ENCODE measurements at regions of chr11 and their contacts with region 1.

Region 1: DNA sequence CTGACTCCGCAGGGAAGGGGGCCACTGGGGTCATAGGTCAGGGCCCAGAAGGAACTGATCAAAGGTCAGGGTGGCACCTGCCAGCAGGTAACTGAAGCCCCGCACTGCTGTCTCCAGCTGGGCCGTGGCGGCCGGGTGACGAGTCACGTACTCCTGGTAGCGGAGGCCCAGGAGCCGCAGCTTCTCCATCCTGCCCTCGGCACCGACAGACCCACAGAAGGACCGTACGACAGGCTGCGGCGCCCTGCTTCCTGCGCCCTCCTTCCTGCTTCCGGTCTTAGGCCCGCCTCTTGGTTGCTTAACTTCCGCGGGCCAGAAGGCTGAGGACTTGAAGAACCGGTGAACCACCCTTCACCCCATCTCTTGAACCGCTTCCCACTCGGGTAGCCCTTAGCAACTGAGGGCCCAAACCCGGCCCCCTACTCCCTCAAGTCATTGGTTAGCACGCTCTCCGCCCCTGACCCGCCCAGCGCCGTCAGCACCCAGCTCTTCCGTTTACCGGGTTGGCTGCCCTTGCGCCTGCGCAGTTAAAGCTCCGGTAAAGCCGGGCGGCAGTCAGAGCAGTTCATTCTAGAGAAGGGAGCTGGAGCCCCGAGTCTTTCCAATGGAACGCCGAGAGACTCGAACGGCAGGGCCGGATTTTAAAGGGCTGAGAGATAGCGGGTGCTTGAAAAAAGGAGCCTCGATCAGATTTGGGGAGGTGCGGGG is at the start of gene PEX16:
- DNase-seq: peak; percentile 87
- ATAC-seq: peak; percentile 85
- H3K4me3 Mint-ChIP-seq: peak within 1 kb of the TSS; percentile 94
- H3K27ac Mint-ChIP-seq: peak within 1 kb of the TSS; percentile 97
- H3K4me1 Mint-ChIP-seq: peaks cover 61% of the 10 kb centered on the region
- H3K27me3 Mint-ChIP-seq: no peaks in the 10 kb centered on the region
- CTCF ChIP-seq: no peak
- total RNA-seq, gene PEX16: 72.0 and 77.7 TPM in 2 replicates

Region 2: GRCh38 chr11:45511361-45511965 is 406.3 kb before region 1 on chr11:
- CTCF ChIA-PET with region 1: no interaction called
- POLR2A ChIA-PET with region 1: no interaction called
- intact Hi-C with region 1: no loop called
- DNase-seq: no peak
- ATAC-seq: no peak
- H3K4me3 Mint-ChIP-seq: no peak overlapping the region
- H3K27ac Mint-ChIP-seq: no peak overlapping the region
- H3K4me1 Mint-ChIP-seq: no peaks in the 10 kb centered on the region
- H3K27me3 Mint-ChIP-seq: peaks cover 3% of the 10 kb centered on the region
- CTCF ChIP-seq: no peak

Region 3: GRCh38 chr11:45859661-45860140 is 58.1 kb before region 1 on chr11:
- CTCF ChIA-PET with region 1: no interaction called
- POLR2A ChIA-PET with region 1: no interaction called
- intact Hi-C with region 1: no loop called
- DNase-seq: no peak
- ATAC-seq: no peak
- H3K4me3 Mint-ChIP-seq: no peak overlapping the region
- H3K27ac Mint-ChIP-seq: no peak overlapping the region
- H3K4me1 Mint-ChIP-seq: peaks cover 2% of the 10 kb centered on the region
- H3K27me3 Mint-ChIP-seq: no peaks in the 10 kb centered on the region
- CTCF ChIP-seq: no peak

Region 4: GRCh38 chr11:45885274-45885920 is 32.4 kb before region 1 on chr11 and contains the start of gene MAPK8IP1:
- CTCF ChIA-PET with region 1: no interaction called
- POLR2A ChIA-PET with region 1: interaction called, 3 read pairs
- intact Hi-C with region 1: loop called (anchors 1 kb)
- DNase-seq: peak; percentile 61
- ATAC-seq: peak; percentile 88
- H3K4me3 Mint-ChIP-seq: peak within 1 kb of the TSS; percentile 80
- H3K27ac Mint-ChIP-seq: no peak within 1 kb of the TSS
- H3K4me1 Mint-ChIP-seq: peaks cover 10% of the 10 kb centered on the region
- H3K27me3 Mint-ChIP-seq: no peaks in the 10 kb centered on the region
- CTCF ChIP-seq: no peak
- total RNA-seq, gene MAPK8IP1: 1.9 and 3.4 TPM in 2 replicates

Region 5: DNA sequence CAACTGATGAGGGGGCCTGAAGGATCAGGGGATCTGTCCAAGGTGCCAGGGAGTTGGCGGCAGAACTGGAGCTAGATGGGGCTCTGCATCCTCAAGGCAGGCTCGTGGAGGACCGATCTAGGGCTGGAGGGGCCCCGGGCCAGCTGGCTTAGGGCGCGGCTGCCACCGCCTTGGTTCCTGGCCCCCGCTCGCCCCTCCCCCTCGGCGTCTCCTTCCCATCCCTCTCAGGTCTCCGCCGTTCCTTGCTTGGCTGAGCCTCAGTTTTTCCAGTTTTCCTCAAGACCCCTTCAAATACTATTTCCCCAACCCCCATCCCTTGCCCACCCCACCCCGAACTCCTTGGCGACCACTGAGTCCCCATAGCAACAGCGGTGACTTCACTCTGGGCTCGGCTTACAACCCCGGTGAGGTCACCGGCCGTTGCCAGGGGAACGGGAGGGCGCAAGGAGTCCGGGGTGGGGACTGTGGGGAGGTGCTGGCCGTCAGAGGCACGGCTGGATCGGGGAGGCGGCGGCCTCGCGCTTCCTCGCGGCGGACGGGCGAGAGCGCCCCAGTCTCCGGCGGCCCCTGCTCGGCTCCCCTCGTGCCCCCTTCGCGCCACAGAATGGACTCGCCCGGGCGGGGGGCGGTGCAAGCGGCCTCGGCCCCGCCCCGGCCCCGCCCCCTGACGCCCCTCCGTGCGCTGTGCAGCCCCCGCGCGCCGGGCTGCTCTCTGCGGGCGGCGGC is 18.2 kb before region 1 on chr11:
- CTCF ChIA-PET with region 1: no interaction called
- POLR2A ChIA-PET with region 1: interaction called, 6 read pairs
- intact Hi-C with region 1: loop called (anchors 1 kb)
- DNase-seq: peak; percentile 74
- ATAC-seq: peak; percentile 87
- H3K4me3 Mint-ChIP-seq: peak overlapping the region; percentile 76
- H3K27ac Mint-ChIP-seq: no peak overlapping the region
- H3K4me1 Mint-ChIP-seq: peaks cover 8% of the 10 kb centered on the region
- H3K27me3 Mint-ChIP-seq: peaks cover 25% of the 10 kb centered on the region
- CTCF ChIP-seq: no peak

Region 6: GRCh38 chr11:45939836-45940235 is 22.1 kb after region 1 on chr11:
- CTCF ChIA-PET with region 1: interaction called, 12 read pairs
- POLR2A ChIA-PET with region 1: interaction called, 263 read pairs
- intact Hi-C with region 1: no loop called
- DNase-seq: no peak
- ATAC-seq: no peak
- H3K4me3 Mint-ChIP-seq: no peak overlapping the region
- H3K27ac Mint-ChIP-seq: peak overlapping the region; percentile 88
- H3K4me1 Mint-ChIP-seq: peaks cover 60% of the 10 kb centered on the region
- H3K27me3 Mint-ChIP-seq: no peaks in the 10 kb centered on the region
- CTCF ChIP-seq: no peak

Region 7: GRCh38 chr11:46006418-46007070 is 88.8 kb after region 1 on chr11:
- CTCF ChIA-PET with region 1: interaction called, 8 read pairs
- POLR2A ChIA-PET with region 1: interaction called, 5 read pairs
- intact Hi-C with region 1: loop called (anchors 1 kb)
- DNase-seq: no peak
- ATAC-seq: peak; percentile 76
- H3K4me3 Mint-ChIP-seq: no peak overlapping the region
- H3K27ac Mint-ChIP-seq: no peak overlapping the region
- H3K4me1 Mint-ChIP-seq: peaks cover 3% of the 10 kb centered on the region
- H3K27me3 Mint-ChIP-seq: no peaks in the 10 kb centered on the region
- CTCF ChIP-seq: peak; percentile 20

Region 8: GRCh38 chr11:46121724-46122477 is 204.1 kb after region 1 on chr11:
- CTCF ChIA-PET with region 1: no interaction called
- POLR2A ChIA-PET with region 1: interaction called, 7 read pairs
- intact Hi-C with region 1: loop called (anchors 5 kb)
- DNase-seq: no peak
- ATAC-seq: peak; percentile 47
- H3K4me3 Mint-ChIP-seq: peak overlapping the region; percentile 87
- H3K27ac Mint-ChIP-seq: peak overlapping the region; percentile 91
- H3K4me1 Mint-ChIP-seq: peaks cover 30% of the 10 kb centered on the region
- H3K27me3 Mint-ChIP-seq: no peaks in the 10 kb centered on the region
- CTCF ChIP-seq: no peak

Measured in activated B cell treated with CpG ODN at 0.5 μM for 24 hours (primary cell).